PC-9 (cell line): ENCODE measurements at regions of chr9 and their contacts with region 1.

Region 1: DNA sequence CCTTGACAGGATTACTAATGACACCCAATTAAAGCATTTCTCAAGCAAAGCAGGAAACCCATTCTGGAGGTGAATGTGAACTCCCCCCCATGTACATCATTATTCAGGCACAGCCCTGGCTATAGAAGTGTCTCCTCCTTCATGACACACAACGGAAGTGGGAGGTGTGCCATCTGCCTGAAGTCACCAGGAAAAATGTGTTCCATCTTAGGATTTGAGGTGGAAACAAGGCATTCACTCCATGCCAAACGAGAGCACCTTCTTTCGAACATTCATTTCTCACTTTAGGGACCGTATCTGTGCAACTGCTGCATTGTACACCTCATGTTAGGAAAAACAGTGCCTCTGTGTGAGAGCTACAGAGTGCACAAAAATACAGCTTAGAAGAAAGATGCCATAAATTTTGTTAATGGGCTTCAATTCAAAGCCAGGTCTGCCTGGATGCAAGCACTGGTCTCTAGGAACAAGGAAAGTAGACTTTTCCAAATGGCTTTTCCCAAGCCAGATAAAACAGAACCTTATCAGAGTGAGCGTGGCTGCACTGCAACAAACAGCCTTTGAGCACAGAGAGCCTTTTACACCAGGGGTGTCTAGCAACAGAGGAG is 19.4 kb downstream of the GOLM1 start:
- DNase-seq: peak in 1 of 2 experiments; percentile 49
- H3K4me3 ChIP-seq: peak overlapping the region; percentile 32; the same call in 1 of the 2 replicates
- H3K27ac ChIP-seq: peak overlapping the region; percentile 95
- H3K4me1 ChIP-seq: peaks cover 29% of the 10 kb centered on the region
- H3K27me3 ChIP-seq: no peaks in the 10 kb centered on the region
- CTCF ChIP-seq: no peak

Region 2: DNA sequence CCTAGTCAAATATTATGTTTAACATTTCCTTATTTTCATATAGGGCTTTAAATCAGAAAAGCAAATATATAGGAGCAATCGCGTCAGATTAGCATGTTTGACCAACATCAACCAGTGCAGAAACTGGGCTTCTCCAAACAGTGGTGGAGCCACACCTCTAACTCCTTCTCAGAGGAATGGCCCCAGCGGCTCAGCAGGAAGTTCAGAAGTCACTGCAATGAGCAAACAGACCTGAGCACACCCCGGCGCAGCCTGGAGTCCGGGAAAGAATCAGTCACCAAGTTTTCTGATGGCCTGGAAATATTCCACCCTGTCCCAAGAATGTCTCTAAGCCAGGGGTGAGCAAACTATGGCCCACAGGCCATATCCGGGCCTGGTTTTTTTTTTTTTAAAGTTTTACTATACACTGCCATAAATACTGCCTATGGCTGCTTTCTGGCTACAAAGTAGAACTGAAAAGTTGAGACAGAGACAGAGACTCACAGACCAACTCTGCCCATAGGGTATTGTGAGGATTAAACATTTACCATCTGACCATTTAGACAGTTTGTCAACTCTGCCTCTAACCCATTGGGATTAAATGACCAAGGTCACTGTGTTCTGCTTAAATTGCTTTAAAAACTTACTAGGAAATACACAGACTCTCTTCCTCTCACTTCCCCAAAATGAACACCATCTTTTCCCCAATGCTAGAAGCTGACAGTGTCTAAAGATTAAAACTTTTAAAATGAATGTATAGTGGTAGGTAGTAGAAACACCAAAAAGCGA is 14.0 kb after region 1 on chr9:
- CTCF ChIA-PET with region 1: interaction called, 3 read pairs
- POLR2A ChIA-PET with region 1: no interaction called
- intact Hi-C with region 1: loop called (anchors 1 kb)
- DNase-seq: peak; percentile 83 to 92
- H3K4me3 ChIP-seq: no peak overlapping the region; the same call in 1 of the 2 replicates
- H3K27ac ChIP-seq: peak overlapping the region; percentile 91
- H3K4me1 ChIP-seq: peaks cover 48% of the 10 kb centered on the region
- H3K27me3 ChIP-seq: no peaks in the 10 kb centered on the region
- CTCF ChIP-seq: no peak

Region 3: GRCh38 chr9:86387399-86387798 is 307.4 kb after region 1 on chr9:
- CTCF ChIA-PET with region 1: no interaction called
- POLR2A ChIA-PET with region 1: no interaction called
- intact Hi-C with region 1: no loop called
- DNase-seq: no peak
- H3K4me3 ChIP-seq: no peak overlapping the region
- H3K27ac ChIP-seq: no peak overlapping the region
- H3K4me1 ChIP-seq: peaks cover 13% of the 10 kb centered on the region; the same call in 1 of the 2 replicates
- H3K27me3 ChIP-seq: no peaks in the 10 kb centered on the region
- CTCF ChIP-seq: no peak

Region 4: GRCh38 chr9:87422999-87423398 is 1343.0 kb after region 1 on chr9:
- CTCF ChIA-PET with region 1: no interaction called
- POLR2A ChIA-PET with region 1: no interaction called
- intact Hi-C with region 1: no loop called
- DNase-seq: no peak
- H3K4me3 ChIP-seq: no peak overlapping the region
- H3K27ac ChIP-seq: no peak overlapping the region
- H3K4me1 ChIP-seq: peaks cover 11% of the 10 kb centered on the region
- H3K27me3 ChIP-seq: no peaks in the 10 kb centered on the region
- CTCF ChIP-seq: no peak